ENCODE measurements at regions of chr16 and their contacts with region 1.

Region 1: DNA sequence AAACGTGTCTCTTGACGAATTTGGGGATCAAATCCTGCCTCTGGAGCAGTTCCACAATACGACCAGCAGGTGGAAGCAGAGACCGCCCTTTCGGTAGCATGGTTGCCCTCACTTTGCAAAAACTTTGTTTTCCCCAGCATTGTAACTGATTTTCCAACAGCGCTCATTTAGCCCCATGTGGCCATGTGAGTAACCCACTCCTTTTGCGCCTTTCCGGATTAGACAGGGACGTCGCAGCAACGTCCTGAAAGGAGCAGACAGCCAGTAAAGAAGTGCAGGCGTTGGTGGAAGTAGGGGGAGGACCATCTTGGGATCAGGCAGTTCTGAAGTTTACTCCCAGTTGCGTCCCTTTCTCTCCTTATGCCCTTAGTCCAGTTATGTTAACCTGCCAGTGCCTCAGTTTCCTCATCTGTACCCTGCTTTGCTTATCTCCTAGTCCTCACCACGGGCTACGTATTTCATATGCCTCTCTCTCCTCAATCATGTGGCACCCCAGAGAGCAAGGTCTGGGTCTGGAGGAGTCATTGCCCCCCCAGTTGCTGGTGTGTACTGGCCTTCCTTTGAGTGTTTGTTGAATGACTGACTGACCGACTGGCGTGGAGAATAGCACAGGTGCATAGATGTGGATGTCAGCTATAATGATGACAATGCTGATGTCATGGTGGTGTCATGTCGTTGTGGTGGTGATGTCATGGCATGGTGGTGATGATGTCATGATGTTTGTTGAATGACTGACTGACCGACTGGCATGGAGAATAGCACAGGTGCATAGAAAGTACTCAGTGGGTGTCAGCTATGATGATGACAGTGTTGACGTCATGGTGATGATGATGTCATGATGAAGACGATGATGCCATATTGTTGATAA is 22.3 kb downstream of the TMEM114 start:
- DNase-seq: peak; percentile 70
- ATAC-seq: peak; percentile 88 to 89

Region 2: GRCh38 chr16:8621572-8622314 is 53.8 kb after region 1 on chr16 and contains the start of gene METTL22:
- intact Hi-C with region 1: loop called in 1 of 2 experiments (anchors 5 kb)
- DNase-seq: peak; percentile 94
- ATAC-seq: peak; percentile 99 to 100
- total RNA-seq, gene METTL22: 24.7 to 31.0 TPM

Region 3: GRCh38 chr16:8878521-8878911 is 310.5 kb after region 1 on chr16:
- intact Hi-C with region 1: loop called (anchors 2 to 5 kb)
- DNase-seq: no peak
- ATAC-seq: peak; percentile 36 to 67

Region 4: DNA sequence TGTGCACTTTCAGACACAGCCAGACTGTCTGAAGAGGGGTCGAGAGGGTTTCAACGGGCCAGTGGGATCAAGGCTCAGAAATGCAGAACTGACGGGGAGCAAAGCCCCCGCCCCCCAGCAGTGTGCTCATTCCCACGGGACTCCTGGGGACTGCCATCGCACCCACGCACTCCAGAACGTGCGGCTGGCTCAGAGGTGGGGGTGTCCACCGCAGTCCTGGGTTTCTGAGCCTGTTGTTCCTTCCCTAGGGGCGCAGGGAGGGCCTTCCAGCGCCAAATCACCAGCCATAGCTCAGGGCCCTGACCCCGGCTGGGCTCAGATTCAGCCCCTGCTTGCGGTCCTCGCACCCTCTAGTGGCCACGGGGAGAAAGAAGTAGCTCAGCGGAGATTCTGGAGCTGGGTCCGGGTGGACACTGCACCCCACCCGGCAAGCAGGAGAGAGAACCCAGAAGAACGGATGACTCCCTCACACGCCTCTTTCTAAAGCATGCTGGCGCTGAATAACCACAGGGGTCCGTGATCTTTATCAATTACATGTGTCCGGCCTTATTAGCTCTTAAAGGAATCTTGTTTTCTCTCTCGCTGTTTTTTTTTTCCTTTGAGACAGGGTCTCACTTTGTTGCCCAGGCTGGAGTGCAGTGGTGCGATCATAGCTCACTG is 440.7 kb after region 1 on chr16:
- intact Hi-C with region 1: loop called in 1 of 2 experiments (anchors 10 kb)
- DNase-seq: peak; percentile 79
- ATAC-seq: peak; percentile 94 to 96

Measured in left cardiac atrium (tissue), 4 donors.